ENCODE measurements at regions of chrX and their contacts with region 1.

Region 1: DNA sequence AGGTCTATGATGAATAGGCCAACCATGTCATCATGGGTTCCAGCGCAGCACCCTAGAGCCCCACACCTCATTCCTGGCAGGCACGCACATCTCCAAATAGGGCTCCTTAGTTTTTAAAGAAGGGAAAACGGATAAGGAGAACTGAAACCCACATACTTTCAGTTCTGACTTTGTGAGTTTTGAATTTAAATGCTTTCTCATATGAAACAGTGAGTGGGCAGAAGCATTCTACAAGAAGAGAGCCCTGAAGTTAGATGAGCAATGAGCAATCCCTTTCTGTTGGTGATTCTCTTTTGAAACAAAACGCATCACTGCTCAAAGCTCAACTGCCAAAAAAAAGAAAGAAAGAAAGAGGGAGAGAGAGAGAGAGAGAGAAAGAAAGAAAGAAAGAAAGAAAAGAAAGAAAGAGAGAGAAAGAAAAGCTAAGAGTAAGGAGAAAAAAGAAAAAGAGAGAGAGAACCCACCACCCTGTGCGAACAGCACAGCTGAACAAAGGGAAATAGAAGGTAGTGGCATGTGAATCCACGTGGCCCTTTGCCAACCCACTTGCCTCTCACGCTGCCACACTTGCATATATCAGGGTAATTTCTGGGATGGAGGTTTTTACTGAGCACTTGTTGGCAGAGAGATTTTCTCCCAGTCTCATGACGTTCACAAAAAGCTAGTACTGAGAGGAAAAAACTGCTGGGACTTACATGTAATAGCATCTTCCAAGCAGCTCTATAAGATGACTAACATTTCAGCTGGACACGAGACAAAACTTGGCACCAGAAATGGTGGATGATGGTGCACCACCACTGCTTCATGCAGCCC is 31.0 kb downstream of the TMSB4X start:
- DNase-seq: peak; percentile 77 to 88 (median 79)
- H3K4me3 ChIP-seq: peak overlapping the region in 1 of 3 experiments; percentile 46
- H3K4me3 Mint-ChIP-seq: peak overlapping the region; percentile 54 to 83
- H3K27ac ChIP-seq: peak overlapping the region; percentile 81 to 94
- H3K27ac Mint-ChIP-seq: peak overlapping the region; percentile 94 to 99 (median 96)
- H3K4me1 ChIP-seq: peaks cover 79 to 83% of the 10 kb centered on the region in 2 donors
- H3K4me1 Mint-ChIP-seq: peaks cover 77% of the 10 kb centered on the region
- H3K27me3 ChIP-seq: peaks cover 0 to 13% of the 10 kb centered on the region in 2 donors
- H3K27me3 Mint-ChIP-seq: peaks cover 0 to 28% (median 0%) of the 10 kb centered on the region in 3 donors
- CTCF ChIP-seq: no peak

Region 2: GRCh38 chrX:12901486-12901885 is 104.4 kb before region 1 on chrX:
- intact Hi-C with region 1: no loop called
- DNase-seq: peak; percentile 37 to 51 (median 40)
- H3K4me3 ChIP-seq: no peak overlapping the region
- H3K4me3 Mint-ChIP-seq: peak overlapping the region; percentile 10 to 42
- H3K27ac ChIP-seq: no peak overlapping the region
- H3K27ac Mint-ChIP-seq: peak overlapping the region in 5 of 7 donors; percentile 6 to 78 (median 35)
- H3K4me1 ChIP-seq: peaks cover 70 to 73% of the 10 kb centered on the region in 2 donors
- H3K4me1 Mint-ChIP-seq: peaks cover 68% of the 10 kb centered on the region
- H3K27me3 ChIP-seq: peaks cover 0 to 6% of the 10 kb centered on the region in 2 donors
- H3K27me3 Mint-ChIP-seq: peaks cover 0 to 40% (median 0%) of the 10 kb centered on the region in 3 donors
- CTCF ChIP-seq: peak; percentile 55

Region 3: DNA sequence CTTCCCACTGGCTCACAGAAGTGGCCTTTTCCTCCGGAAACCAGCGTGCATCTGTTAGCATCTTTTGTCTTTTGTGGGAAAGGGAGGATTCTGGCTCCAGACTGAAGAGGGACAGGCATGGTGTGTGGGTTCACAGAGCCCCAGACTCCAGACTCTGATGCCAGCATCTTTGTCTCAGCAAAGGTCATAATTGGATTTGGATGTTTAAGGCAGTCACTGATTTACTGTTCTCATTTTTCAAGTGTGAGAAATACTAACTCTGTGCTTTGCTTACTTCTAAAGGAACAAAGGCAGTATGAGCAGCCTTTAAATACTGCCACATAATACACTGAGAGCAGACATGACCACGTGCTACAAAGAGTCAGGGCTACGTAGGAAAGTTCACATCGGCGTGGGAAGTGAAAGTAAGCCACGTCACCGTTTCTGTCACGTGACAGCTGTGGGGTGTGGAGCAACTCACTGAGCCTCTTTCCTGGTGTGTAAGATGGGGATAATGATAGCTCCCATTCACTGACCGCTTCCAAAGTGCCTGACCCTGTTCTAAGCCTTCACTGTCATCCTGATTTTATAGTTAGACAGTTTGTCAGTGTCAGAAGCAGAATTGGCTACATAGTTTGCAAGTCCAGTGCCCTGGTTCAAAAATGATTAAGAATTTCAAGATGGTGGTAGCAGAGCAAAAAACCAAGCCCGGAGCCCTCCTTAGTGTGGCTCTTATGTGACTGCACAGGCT is 55.8 kb before region 1 on chrX:
- intact Hi-C with region 1: loop called in 1 of 2 experiments (anchors 10 kb)
- DNase-seq: peak; percentile 91 to 97 (median 96)
- H3K4me3 ChIP-seq: peak overlapping the region; percentile 13 to 44 (median 24)
- H3K4me3 Mint-ChIP-seq: peak overlapping the region; percentile 77 to 86
- H3K27ac ChIP-seq: peak overlapping the region; percentile 86 to 94
- H3K27ac Mint-ChIP-seq: peak overlapping the region; percentile 96 to 99 (median 98)
- H3K4me1 ChIP-seq: peaks cover 78 to 87% of the 10 kb centered on the region in 2 donors
- H3K4me1 Mint-ChIP-seq: peaks cover 75% of the 10 kb centered on the region
- H3K27me3 ChIP-seq: peaks cover 0 to 17% of the 10 kb centered on the region in 2 donors
- H3K27me3 Mint-ChIP-seq: peaks cover 0 to 42% (median 0%) of the 10 kb centered on the region in 3 donors
- CTCF ChIP-seq: no peak

Region 4: DNA sequence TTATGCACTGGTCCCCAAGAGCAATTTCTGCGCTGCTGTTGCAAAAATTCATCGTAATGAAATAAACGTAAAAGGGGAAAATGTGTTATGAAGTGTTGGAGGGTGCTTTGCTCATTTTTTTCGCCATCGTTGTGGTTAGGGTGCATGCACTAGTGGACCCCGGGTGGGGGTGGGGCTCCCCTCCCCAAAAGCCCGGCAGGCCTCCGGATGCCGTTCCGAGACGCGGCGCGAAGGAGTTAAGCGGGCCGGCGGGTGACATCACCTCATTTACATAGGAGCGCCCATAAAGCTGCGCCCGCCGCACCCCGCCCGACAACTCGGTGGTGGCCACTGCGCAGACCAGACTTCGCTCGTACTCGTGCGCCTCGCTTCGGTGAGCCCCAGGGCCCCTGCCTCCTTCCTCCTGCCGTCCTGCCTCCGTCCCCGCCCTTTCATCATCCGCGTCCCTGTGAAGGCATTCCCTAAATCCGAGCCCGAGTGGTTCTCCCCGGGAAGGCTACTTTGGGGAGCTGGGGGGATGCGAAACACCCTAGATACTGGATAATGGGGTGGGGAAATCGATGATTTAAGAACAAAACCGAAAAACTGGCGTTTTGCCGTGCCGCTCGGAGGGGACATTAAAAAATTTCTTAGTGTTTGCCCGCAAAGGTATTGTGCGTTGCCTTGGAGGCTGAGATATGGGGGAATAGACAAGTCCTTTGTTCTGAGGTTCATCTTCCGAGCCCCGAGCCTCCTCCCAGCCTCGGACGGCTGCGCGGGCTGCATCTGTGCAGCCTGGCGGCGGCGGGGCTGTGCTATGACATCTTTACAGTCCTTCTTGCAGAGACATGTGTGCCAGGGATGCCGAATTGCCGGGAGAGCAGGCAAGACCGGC is 30.8 kb before region 1 on chrX and contains the start of gene TMSB4X:
- intact Hi-C with region 1: loop called in 1 of 2 experiments (anchors 5 kb)
- DNase-seq: peak; percentile 70 to 85 (median 79)
- H3K4me3 ChIP-seq: peak within 1 kb of the TSS; percentile 87 to 97 (median 95)
- H3K4me3 Mint-ChIP-seq: peak within 1 kb of the TSS; percentile 98
- H3K27ac ChIP-seq: peak within 1 kb of the TSS; percentile 93 to 98
- H3K27ac Mint-ChIP-seq: peak within 1 kb of the TSS; percentile 94 to 99 (median 97)
- H3K4me1 ChIP-seq: peaks cover 41 to 77% of the 10 kb centered on the region in 2 donors
- H3K4me1 Mint-ChIP-seq: peaks cover 46% of the 10 kb centered on the region
- H3K27me3 ChIP-seq: peaks cover 0 to 8% of the 10 kb centered on the region in 2 donors
- H3K27me3 Mint-ChIP-seq: peaks cover 0 to 81% (median 0%) of the 10 kb centered on the region in 3 donors
- CTCF ChIP-seq: no peak
- polyA plus RNA-seq, gene TMSB4X: 15,641 to 31,074 (median 27,127) TPM

Region 5: DNA sequence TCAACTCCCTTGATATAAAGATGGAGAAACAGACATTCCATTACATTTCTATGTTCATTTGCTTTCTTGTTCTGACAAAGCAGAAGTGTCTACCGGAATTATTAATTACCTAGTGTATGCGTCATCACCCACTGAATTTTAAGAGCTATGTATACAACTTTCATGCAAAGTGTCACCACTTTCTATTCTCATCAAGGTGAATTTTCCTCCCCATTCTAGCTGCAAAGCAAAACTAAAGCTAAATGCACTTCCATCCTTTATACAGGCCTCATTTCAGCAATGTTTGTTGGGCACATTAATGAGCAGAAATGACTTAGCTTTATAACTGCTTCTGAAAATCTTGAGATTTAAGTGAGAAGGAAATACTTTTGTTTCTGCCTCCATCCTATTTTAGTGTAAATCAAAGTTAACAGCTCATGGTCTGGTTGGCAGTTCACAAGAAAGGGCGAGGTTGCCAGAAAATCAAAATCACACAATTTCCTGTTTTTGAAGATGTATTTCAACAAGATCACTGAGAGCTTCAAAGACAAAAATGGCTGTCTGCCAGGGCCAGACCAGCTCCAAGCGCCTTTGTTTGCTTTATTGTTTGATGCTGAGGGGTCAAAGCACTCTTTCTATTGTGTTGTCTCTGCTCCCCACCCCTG is 45.8 kb after region 1 on chrX:
- intact Hi-C with region 1: loop called in 1 of 2 experiments (anchors 5 kb)
- DNase-seq: peak; percentile 31 to 54 (median 46)
- H3K4me3 ChIP-seq: no peak overlapping the region
- H3K4me3 Mint-ChIP-seq: no peak overlapping the region
- H3K27ac ChIP-seq: peak overlapping the region; percentile 59 to 77
- H3K27ac Mint-ChIP-seq: peak overlapping the region; percentile 81 to 90 (median 85)
- H3K4me1 ChIP-seq: peaks cover 69 to 76% of the 10 kb centered on the region in 2 donors
- H3K4me1 Mint-ChIP-seq: peaks cover 64% of the 10 kb centered on the region
- H3K27me3 ChIP-seq: peaks cover 0 to 25% of the 10 kb centered on the region in 2 donors
- H3K27me3 Mint-ChIP-seq: peaks cover 0 to 44% (median 0%) of the 10 kb centered on the region in 3 donors
- CTCF ChIP-seq: no peak

Region 6: GRCh38 chrX:13087322-13088155 is 81.7 kb after region 1 on chrX:
- intact Hi-C with region 1: loop called in 1 of 2 experiments (anchors 10 kb)
- DNase-seq: peak; percentile 90 to 94 (median 92)
- H3K4me3 ChIP-seq: peak overlapping the region in 1 of 3 experiments; percentile 2
- H3K4me3 Mint-ChIP-seq: peak overlapping the region; percentile 34 to 46
- H3K27ac ChIP-seq: peak overlapping the region; percentile 95 to 99
- H3K27ac Mint-ChIP-seq: peak overlapping the region; percentile 93 to 98 (median 98)
- H3K4me1 ChIP-seq: peaks cover 96 to 98% of the 10 kb centered on the region in 2 donors
- H3K4me1 Mint-ChIP-seq: peaks cover 80% of the 10 kb centered on the region
- H3K27me3 ChIP-seq: peaks cover 0 to 6% of the 10 kb centered on the region in 2 donors
- H3K27me3 Mint-ChIP-seq: peaks cover 0 to 21% (median 0%) of the 10 kb centered on the region in 3 donors
- CTCF ChIP-seq: no peak